ENCODE measurements at regions of chr1 and their contacts with region 1.

Region 1: GRCh38 chr1:109564194-109564878 is 15.9 kb downstream of the GNAI3 start:
- DNase-seq: no peak
- ATAC-seq: no peak
- H3K4me3 ChIP-seq: no peak overlapping the region
- H3K27ac ChIP-seq: no peak overlapping the region
- H3K4me1 ChIP-seq: peaks cover 7% of the 10 kb centered on the region
- H3K27me3 ChIP-seq: no peaks in the 10 kb centered on the region
- CTCF ChIP-seq: no peak
- POLR2A ChIP-seq: no peak
- RAD21 ChIP-seq: no peak

Region 2: DNA sequence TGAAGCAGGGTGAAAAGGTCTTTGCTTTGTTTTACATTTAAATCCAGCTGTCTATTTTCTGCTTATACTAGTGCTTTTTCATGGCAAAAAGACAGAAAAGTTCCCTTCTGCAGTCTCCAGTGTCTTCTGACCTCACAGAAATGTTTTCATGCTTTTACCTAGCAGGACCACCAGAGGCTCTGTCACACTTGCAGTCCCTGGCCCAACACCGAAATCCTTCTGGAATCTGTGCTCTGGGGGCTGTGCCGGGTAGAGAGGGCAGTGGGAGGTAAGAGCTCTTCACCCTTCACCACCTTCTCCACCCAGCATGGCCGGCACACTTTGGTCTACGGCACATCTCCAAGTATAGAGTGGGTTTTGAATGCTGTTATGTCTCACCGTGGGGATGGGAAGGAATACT is 34.3 kb after region 1 on chr1:
- CTCF ChIA-PET with region 1: interaction called, 3 read pairs
- POLR2A ChIA-PET with region 1: no interaction called
- dilution Hi-C with region 1: no loop called
- in situ Hi-C with region 1: no loop called
- intact Hi-C with region 1: loop called (anchors 5 kb)
- DNase-seq: no peak
- ATAC-seq: no peak
- H3K4me3 ChIP-seq: no peak overlapping the region
- H3K27ac ChIP-seq: no peak overlapping the region
- H3K4me1 ChIP-seq: peaks cover 8% of the 10 kb centered on the region
- H3K27me3 ChIP-seq: no peaks in the 10 kb centered on the region
- CTCF ChIP-seq: no peak
- POLR2A ChIP-seq: no peak
- RAD21 ChIP-seq: no peak

Region 3: GRCh38 chr1:109722908-109723691 is 158.8 kb after region 1 on chr1:
- CTCF ChIA-PET with region 1: no interaction called
- POLR2A ChIA-PET with region 1: no interaction called
- dilution Hi-C with region 1: no loop called
- in situ Hi-C with region 1: no loop called
- intact Hi-C with region 1: no loop called
- DNase-seq: peak; percentile 6
- ATAC-seq: peak; percentile 53
- H3K4me3 ChIP-seq: no peak overlapping the region
- H3K27ac ChIP-seq: no peak overlapping the region
- H3K4me1 ChIP-seq: peaks cover 8% of the 10 kb centered on the region; the same call in 1 of the 2 replicates
- H3K27me3 ChIP-seq: peaks cover 4% of the 10 kb centered on the region
- CTCF ChIP-seq: no peak
- POLR2A ChIP-seq: no peak
- RAD21 ChIP-seq: no peak